ENCODE measurements at regions of chr17 and their contacts with region 1.

Region 1: DNA sequence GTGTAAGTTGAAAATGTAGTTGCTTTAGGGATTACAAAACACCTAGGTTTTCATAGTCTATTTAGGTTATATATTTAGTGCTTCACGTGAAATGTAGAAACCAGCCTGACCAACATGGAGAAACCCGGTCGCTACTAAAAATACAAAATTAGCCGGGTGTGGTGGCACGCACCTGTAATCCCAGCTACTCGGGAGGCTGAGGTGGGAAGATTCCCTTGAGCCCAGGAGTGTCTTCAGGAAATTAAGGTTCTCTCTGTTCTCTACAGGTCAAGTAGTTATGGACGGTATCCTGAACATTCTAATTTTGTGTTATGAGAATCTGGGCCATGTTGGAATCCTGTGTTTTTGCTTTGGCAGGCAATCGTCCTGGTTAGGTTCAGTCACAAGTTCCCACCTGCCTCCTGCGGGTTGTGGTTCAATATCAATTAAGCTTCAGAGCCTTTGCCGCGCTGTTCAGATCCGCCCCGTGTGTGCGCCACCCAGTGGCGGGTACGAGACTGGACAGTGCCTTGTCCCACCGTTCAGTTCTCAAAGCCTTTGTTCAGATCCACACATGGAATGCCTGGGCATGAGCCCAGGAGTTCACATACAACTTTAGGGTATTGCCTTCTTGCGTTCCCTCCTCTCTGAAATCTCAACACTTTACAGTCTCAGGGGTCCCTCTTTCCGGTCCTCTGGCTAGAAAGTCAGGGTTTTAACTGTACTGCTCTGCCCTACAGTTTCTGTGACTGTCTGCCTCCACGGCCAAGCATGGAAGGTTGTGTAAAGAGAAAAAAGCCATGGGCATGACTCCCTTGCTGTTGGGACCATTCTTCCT is 41.7 kb downstream of the HEATR6 start:
- DNase-seq: peak; percentile 24 to 80 (median 66)
- ATAC-seq: peak; percentile 66 to 93 (median 86)
- H3K4me3 ChIP-seq: peak overlapping the region in 1 of 12 donors; percentile 2
- H3K27ac ChIP-seq: no peak overlapping the region
- H3K4me1 ChIP-seq: peaks cover 0 to 6% (median 0%) of the 10 kb centered on the region in 12 donors
- H3K27me3 ChIP-seq: peaks cover 0 to 19% (median 4%) of the 10 kb centered on the region in 9 donors
- CTCF ChIP-seq: peak; percentile 74 to 93 (median 88)
- POLR2A ChIP-seq: no peak

Region 2: DNA sequence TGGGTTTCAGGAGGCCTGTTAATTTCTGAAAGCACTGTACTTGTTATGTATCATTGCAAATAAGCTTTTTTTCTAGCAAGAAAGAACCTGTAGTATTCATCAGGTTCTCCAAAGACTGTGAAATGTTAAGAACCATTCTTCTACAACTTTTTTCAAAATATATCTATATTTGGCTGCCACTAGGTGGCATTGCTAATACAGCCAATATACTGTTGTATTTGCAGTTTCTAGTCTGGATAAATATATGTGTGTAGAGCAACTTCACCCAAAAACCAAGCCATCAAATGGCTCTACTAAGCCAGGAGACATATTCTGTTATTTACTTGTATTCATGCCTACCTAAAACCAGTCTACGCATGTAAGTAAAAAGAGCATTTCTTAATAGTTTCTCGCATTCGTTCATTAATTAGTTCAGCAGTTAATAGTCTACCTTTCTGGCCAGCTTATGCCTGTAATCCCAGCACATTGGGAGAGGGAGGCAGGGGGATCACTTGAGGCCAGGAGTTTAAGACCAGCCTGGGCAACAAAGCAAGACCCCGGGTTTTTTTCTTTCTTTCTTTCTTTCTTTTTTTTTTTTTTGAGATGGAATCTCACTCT is 290.1 kb before region 1 on chr17:
- intact Hi-C with region 1: loop called in 5 of 10 experiments (anchors 5 to 10 kb)
- DNase-seq: no peak
- ATAC-seq: peak in 1 of 4 donors; percentile 41
- H3K4me3 ChIP-seq: no peak overlapping the region
- H3K27ac ChIP-seq: no peak overlapping the region
- H3K4me1 ChIP-seq: peaks cover 0 to 15% (median 0%) of the 10 kb centered on the region in 12 donors
- H3K27me3 ChIP-seq: no peaks in the 10 kb centered on the region
- CTCF ChIP-seq: peak; percentile 35 to 74 (median 60)
- POLR2A ChIP-seq: no peak

Region 3: DNA sequence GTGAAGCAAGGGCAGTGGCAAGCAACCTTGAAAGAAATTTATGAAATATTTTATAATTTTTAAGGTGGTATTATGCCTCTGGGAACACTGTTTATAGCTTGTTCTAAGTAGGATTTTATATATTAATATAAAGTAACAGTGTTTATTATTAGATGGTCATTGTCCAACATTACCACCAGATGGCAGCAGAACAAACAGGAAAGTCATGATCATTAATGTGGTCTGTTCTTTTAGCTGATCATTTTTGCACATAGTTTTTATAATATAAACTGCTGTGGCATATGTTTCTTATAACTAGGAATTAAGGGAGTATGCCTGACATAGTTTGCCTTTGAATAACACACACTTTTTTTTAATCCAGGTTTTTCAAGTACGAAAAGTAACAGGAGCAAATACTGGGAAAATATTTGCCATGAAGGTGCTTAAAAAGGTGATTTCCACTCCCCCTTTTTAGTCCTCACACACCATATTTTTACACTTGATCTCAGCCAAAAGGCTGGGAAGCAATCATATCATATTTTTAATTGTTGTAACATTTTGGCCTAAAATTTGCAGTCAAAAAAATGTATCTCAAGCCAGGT is 122.6 kb before region 1 on chr17:
- intact Hi-C with region 1: loop called in 7 of 10 experiments (anchors 5 to 10 kb)
- DNase-seq: no peak
- ATAC-seq: peak in 1 of 4 donors; percentile 46
- H3K4me3 ChIP-seq: no peak overlapping the region
- H3K27ac ChIP-seq: no peak overlapping the region
- H3K4me1 ChIP-seq: no peaks in the 10 kb centered on the region
- H3K27me3 ChIP-seq: no peaks in the 10 kb centered on the region
- CTCF ChIP-seq: peak; percentile 48 to 75 (median 68)
- POLR2A ChIP-seq: no peak